HAP-1 (cell line): ENCODE measurements at regions of chr9 and their contacts with region 1.

Region 1: DNA sequence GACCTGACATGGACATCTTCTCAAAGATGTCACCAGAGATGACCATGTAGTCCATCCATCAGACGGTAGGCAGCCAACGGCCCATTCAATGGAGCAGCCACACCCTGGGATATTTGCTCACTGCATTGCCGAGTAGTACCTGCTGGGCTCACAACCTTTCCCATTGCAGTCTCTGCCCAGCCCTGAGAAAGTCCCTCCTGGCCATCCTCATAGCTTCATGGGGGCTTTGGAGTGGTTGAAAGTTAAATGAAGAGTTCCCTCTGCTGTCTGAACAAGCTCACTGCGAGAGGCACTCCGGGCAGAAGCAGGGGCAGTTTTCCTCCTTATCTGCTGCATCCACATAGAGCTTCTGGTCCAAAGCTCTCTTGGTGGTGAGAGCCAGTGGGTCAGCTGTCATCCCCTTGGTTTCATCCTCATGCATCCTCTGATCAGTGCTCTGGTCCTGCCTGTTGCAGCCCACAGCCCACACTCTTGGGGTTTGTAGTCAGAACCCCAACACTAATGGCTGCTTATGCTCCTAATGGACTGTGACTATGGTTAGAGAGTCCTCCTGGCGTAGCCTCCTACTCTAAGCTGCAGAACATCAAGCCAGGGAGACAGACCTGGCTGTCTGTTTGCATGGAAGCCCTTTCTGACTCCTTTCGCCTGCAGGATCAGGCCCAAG is 23.4 kb downstream of the TNFSF8 start:
- DNase-seq: no peak
- H3K4me3 ChIP-seq: no peak overlapping the region
- H3K4me1 ChIP-seq: no peaks in the 10 kb centered on the region
- H3K27me3 ChIP-seq: no peaks in the 10 kb centered on the region

Region 2: GRCh38 chr9:114621975-114622609 is 284.9 kb before region 1 on chr9:
- in situ Hi-C with region 1: no loop called
- DNase-seq: no peak
- H3K4me3 ChIP-seq: no peak overlapping the region
- H3K4me1 ChIP-seq: no peaks in the 10 kb centered on the region
- H3K27me3 ChIP-seq: no peaks in the 10 kb centered on the region

Region 3: GRCh38 chr9:114738581-114739316 is 168.3 kb before region 1 on chr9:
- in situ Hi-C with region 1: loop called (anchors 10 kb)
- DNase-seq: peak; percentile 17 to 68
- H3K4me3 ChIP-seq: no peak overlapping the region
- H3K4me1 ChIP-seq: no peaks in the 10 kb centered on the region
- H3K27me3 ChIP-seq: peaks cover 17% of the 10 kb centered on the region